Heart left ventricle (tissue), 16 donors: ENCODE measurements at regions of chr9 and their contacts with region 1.

Region 1: DNA sequence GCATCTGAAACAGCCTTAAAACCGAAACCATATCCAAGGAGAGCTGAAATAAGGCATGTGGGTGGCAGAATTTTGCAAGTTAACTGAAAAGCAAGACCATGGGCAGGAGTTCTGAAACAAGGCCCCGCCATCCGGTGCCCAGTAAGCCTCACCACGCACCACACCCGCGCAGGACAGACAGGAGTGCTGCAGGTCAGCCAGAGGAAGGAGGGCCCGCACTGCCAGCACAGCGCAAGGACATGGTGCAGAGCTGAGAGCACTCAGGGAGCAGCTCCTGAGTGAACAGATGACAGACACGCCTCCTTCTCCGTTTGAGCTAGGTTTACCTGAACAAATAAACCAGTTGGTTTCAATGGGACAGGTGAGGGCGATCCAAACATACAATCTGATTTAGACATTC is 16.5 kb upstream of the ISCA1 start:
- DNase-seq: no peak
- ATAC-seq: no peak
- H3K4me3 ChIP-seq: no peak overlapping the region
- H3K27ac ChIP-seq: no peak overlapping the region
- H3K4me1 ChIP-seq: no peaks in the 10 kb centered on the region
- H3K27me3 ChIP-seq: no peaks in the 10 kb centered on the region
- CTCF ChIP-seq: no peak
- POLR2A ChIP-seq: no peak

Region 2: DNA sequence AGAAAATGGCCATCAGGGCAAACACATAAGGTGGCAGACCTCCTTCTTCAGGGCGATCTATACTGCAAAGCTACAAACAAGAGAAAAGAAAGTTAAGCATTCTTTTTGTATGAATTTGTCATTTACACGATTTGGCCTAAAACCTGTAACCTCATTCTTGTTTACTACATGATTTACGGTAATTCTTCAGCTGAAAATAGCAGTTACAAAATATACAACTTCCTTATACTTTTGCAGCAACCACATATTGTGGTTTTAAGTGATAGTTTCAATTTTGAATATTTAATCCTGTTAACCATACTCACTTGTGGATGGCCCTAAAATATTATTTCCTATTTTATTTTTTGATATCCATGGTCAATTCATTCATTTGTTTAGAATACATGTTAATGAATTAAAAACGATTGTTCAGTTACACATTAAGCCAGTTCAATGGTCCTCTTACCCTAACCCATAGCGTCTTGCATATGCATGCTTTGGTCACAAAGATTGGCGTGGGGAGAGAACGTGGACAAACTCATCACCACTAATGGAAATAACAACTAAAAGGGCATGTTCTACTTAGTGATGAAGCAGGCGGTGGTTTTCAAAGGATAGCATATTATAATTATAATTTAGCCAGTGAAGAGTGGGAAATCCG is 38.7 kb after region 1 on chr9:
- intact Hi-C with region 1: loop called in 3 of 10 experiments (anchors 5 to 10 kb)
- DNase-seq: no peak
- ATAC-seq: no peak
- H3K4me3 ChIP-seq: peak overlapping the region in 1 of 12 donors; percentile 35
- H3K27ac ChIP-seq: peak overlapping the region in 1 of 12 donors; percentile 37
- H3K4me1 ChIP-seq: peaks cover 0 to 28% (median 0%) of the 10 kb centered on the region in 12 donors
- H3K27me3 ChIP-seq: no peaks in the 10 kb centered on the region
- CTCF ChIP-seq: no peak
- POLR2A ChIP-seq: no peak